ENCODE measurements at regions of chr10 and their contacts with region 1.

Region 1: DNA sequence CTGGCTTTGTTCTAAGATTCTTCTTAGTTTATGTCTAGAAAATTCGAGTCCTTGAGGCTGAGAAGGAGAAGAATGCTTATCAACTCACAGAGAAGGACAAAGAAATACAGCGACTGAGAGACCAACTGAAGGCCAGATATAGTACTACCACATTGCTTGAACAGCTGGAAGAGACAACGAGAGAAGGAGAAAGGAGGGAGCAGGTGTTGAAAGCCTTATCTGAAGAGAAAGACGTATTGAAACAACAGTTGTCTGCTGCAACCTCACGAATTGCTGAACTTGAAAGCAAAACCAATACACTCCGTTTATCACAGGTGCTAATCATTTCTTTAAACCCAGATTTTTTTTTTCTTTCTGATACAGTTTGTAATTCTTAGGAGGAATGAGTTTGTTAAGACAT is 6.7 kb downstream of the CEP55 start:
- DNase-seq: no peak

Region 2: DNA sequence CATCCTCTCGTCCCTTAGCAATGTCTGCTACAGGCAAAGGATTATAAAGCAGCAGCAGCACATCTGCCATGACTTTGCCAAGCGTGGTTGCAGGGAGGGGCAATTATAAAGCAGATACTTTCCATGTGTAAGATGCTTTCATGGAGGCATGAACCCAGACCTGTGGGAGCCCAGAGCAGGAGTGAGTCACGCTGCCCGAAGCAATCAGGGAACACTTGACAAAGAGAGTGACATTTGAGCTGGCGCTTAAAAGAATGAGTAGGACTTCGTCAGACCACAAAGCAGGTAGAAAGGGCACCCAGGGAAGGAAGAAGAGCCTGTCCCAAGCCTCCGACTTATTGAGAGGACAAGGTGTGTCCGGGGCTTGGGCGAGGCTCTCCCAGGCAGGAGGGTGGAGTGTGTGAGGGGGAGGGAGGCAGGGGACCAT is 168.2 kb before region 1 on chr10:
- in situ Hi-C with region 1: loop called (anchors 25 kb)
- DNase-seq: no peak